ENCODE measurements at regions of chr1 and their contacts with region 1.

Region 1: GRCh38 chr1:223748773-223749733 is 36.7 kb downstream of the CAPN2 start:
- H3K4me3 ChIP-seq: no peak overlapping the region
- H3K27ac ChIP-seq: no peak overlapping the region
- H3K4me1 ChIP-seq: no peaks in the 10 kb centered on the region
- CTCF ChIP-seq: peak; percentile 82

Region 2: DNA sequence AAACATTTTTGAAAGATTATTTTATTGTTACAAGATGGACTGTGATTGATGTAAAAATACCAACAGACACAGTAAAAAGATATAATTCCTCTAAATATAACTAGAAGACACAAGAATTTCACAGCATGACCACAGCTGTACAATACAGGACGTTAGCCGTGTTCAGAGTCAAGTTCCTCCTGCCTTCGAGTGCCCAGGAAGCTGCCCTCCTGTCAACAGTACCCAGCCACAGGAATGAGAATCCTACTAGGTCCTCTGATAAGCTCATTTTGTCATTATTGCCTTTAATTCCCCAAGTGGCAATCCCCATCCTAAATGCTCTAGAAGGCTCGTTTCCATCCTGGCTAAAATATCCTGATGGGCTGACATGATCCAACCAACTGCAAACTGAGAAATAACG is 53.1 kb before region 1 on chr1:
- CTCF ChIA-PET with region 1: interaction called, 70 read pairs
- POLR2A ChIA-PET with region 1: interaction called, 4 read pairs
- H3K4me3 ChIP-seq: no peak overlapping the region
- H3K27ac ChIP-seq: no peak overlapping the region
- H3K4me1 ChIP-seq: peaks cover 3% of the 10 kb centered on the region
- CTCF ChIP-seq: no peak

Region 3: DNA sequence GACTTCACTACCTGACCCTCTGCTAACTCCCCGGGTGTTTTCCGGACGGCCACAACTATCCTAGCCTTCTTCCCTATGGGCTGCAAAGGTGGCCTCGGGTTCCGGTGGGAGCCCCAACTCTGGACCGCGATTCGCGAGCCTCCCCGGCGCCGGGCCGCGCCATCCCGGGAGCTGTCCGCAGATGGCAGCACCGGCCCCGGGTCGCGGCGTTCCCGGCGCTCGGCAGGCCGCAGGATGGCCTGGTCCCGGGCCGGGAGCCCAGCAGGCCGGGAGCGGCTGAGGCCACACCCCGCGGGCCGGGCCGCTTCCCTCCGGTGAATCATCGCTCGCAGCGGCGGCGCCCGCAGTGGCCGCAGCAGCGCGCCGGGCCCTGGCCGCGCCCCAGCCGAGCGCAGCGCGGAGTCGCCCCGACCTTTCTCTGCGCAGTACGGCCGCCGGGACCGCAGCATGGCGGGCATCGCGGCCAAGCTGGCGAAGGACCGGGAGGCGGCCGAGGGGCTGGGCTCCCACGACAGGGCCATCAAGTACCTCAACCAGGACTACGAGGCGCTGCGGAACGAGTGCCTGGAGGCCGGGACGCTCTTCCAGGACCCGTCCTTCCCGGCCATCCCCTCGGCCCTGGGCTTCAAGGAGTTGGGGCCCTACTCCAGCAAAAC is 36.7 kb before region 1 on chr1 and contains the start of gene CAPN2:
- CTCF ChIA-PET with region 1: interaction called, 31 read pairs
- POLR2A ChIA-PET with region 1: interaction called, 3 read pairs
- H3K4me3 ChIP-seq: peak within 1 kb of the TSS; percentile 86
- H3K27ac ChIP-seq: peak within 1 kb of the TSS; percentile 95
- H3K4me1 ChIP-seq: peaks cover 46% of the 10 kb centered on the region
- CTCF ChIP-seq: peak; percentile 41; the same call in 1 of the 2 replicates

Region 4: GRCh38 chr1:223738465-223739365 is 10.3 kb before region 1 on chr1:
- CTCF ChIA-PET with region 1: interaction called, 37 read pairs
- POLR2A ChIA-PET with region 1: no interaction called
- H3K4me3 ChIP-seq: no peak overlapping the region
- H3K27ac ChIP-seq: no peak overlapping the region
- H3K4me1 ChIP-seq: peaks cover 26% of the 10 kb centered on the region
- CTCF ChIP-seq: peak; percentile 19; the same call in 1 of the 2 replicates

Region 5: DNA sequence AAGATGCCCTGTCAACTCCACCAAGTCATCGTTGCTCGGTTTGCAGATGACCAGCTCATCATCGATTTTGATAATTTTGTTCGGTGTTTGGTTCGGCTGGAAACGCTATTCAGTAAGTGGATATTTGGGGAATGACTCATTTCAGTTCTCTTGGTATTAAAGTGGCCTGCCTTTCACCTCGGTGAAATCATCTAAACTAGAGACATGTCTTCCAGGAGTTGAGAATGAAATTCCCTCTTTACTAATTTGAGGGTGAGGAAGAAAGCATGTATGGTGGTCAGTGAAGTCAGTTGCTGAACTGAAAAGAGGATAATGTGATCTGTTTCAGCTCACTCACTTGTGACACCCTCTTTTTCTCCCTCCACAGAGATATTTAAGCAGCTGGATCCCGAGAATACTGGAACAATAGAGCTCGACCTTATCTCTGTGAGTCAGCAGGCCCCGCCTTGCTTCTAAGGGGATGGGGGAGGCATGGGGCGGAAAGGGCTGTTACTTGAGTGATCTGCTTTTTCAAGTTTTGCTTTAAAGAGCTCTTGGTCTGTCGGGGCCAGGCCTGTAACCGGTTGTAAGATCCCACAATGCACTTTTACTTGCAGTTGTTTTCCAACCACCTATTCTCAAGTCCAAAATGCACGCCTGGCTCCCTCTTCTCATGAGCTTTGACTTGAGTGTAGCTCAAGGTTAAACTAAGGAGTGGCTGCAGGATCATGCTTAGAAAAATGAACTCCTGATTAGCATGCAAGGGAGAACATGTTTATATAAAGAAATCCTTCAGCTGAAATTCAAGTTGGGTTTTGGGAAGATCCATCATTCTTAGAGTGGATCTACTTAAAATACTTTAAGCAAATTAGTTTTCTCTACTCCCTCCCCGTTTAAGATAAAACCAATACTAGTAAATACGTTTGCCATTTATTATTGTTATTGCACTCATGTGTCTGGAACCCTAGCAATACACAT is 23.0 kb after region 1 on chr1:
- CTCF ChIA-PET with region 1: interaction called, 30 read pairs
- POLR2A ChIA-PET with region 1: no interaction called
- H3K4me3 ChIP-seq: no peak overlapping the region
- H3K27ac ChIP-seq: peak overlapping the region; percentile 26
- H3K4me1 ChIP-seq: peaks cover 15% of the 10 kb centered on the region
- CTCF ChIP-seq: no peak

Region 6: GRCh38 chr1:224092601-224093000 is 343.5 kb after region 1 on chr1:
- CTCF ChIA-PET with region 1: no interaction called
- POLR2A ChIA-PET with region 1: no interaction called
- H3K4me3 ChIP-seq: no peak overlapping the region
- H3K27ac ChIP-seq: no peak overlapping the region
- H3K4me1 ChIP-seq: no peaks in the 10 kb centered on the region
- CTCF ChIP-seq: no peak

Measured in HEK293 (cell line).